ENCODE measurements at regions of chr1 and their contacts with region 1.

Region 1: DNA sequence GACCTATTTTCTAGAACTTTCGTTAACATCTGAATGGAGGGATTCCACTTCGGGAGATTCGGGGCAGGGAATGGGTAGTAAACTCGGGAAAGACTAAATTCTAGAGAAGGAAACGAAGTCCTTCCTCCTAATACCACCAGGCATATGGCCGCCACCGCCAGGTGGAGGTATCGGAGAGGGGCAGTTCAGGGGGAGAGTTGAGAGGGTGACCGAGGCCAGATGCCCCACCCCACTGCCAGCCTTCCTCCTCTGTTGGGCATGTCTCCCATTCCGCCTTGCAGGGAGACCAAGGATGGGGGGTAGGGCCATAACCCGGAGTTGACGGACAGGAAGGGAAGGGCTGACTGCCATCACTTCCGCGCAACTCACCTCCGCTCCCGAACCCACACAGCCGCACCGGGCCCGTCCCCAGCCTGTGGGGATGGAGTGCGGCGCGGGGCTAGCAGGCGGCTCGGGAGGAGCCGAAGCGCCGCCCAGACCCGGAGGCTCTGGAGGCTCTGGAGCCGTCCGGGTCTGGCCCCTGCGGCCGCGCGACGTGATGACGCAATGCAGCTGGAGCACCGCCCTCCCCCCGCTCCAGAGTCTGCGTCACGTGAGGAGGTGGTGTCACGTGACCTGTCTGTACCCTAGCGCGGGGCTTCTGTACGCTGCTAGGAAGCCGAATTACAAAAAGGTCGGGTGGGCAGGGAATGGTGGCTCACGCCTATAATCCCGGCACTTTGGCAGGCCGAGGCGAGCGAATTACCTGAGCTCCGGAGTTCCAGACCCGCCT is at the start of gene KLHL12:
- DNase-seq: peak; percentile 85
- ATAC-seq: peak; percentile 99
- H3K4me3 ChIP-seq: peak within 1 kb of the TSS; percentile 81 to 98
- H3K27ac ChIP-seq: peak within 1 kb of the TSS; percentile 97
- H3K4me1 ChIP-seq: peaks cover 6% of the 10 kb centered on the region; the same call in 1 of the 2 replicates
- H3K27me3 ChIP-seq: no peaks in the 10 kb centered on the region
- CTCF ChIP-seq: peak; percentile 73
- total RNA-seq, gene KLHL12: 37.8 TPM

Region 2: GRCh38 chr1:202880961-202881460 is 45.9 kb before region 1 on chr1:
- CTCF ChIA-PET with region 1: no interaction called
- POLR2A ChIA-PET with region 1: interaction called, 24 read pairs
- in situ Hi-C with region 1: no loop called
- intact Hi-C with region 1: no loop called
- DNase-seq: no peak
- ATAC-seq: no peak
- H3K4me3 ChIP-seq: no peak overlapping the region
- H3K27ac ChIP-seq: no peak overlapping the region
- H3K4me1 ChIP-seq: no peaks in the 10 kb centered on the region
- H3K27me3 ChIP-seq: no peaks in the 10 kb centered on the region
- CTCF ChIP-seq: no peak

Region 3: DNA sequence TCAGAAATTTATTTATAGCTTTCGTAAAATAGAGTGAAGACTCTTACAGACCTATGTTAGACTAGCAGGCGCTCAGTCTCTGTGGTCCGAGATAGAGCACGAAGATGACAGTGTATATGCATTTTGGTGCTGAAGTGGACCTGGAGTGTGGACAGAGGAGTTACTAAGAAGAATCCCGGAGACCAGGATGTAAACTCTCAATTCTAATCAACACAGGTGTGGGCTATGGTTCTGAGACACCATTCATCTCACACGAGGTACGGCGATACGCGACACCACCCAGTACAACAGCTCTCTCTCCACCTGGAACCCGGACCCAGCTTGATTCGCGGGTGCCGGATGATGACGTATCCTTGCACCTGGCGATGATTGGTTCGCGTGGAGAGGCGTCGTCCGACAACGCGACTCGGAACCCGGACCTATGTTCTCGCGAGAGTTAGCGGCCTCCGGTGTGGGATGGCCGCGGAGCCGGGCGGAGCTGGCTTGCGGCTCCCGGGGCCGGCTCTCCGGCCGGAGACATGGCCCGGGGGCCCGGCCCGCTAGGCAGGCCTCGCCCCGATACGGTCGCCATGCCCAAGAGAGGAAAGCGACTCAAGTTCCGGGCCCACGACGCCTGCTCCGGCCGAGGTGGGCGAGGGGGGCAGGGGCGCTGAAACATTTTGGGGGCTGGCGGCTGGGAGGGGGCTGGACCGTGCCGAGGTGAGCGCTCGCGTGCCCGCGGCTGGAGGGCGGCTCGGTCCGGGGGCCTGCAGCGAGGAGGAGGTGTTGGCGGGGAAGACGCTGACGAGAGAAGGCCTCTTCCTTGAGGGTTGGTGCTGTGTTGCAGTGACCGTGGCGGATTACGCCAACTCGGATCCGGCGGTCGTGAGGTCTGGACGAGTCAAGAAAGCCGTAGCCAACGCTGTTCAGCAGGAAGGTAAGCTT is 80.3 kb after region 1 on chr1 and contains the start of gene TMEM183A:
- CTCF ChIA-PET with region 1: no interaction called
- POLR2A ChIA-PET with region 1: interaction called, 11 read pairs
- in situ Hi-C with region 1: no loop called
- intact Hi-C with region 1: no loop called
- DNase-seq: peak; percentile 88
- ATAC-seq: peak; percentile 98
- H3K4me3 ChIP-seq: peak within 1 kb of the TSS; percentile 64 to 70
- H3K27ac ChIP-seq: peak within 1 kb of the TSS; percentile 91
- H3K4me1 ChIP-seq: peaks cover 10% of the 10 kb centered on the region
- H3K27me3 ChIP-seq: no peaks in the 10 kb centered on the region
- CTCF ChIP-seq: no peak
- total RNA-seq, gene TMEM183A: 59.1 TPM

Measured in Panc1 (cell line).